ENCODE measurements at regions of chr4 and their contacts with region 1.

Region 1: GRCh38 chr4:98150092-98150761 is 7.0 kb upstream of the STPG2 start:
- DNase-seq: peak in 3 of 14 experiments; percentile 13 to 22 (median 13)
- ATAC-seq: no peak
- H3K4me3 ChIP-seq: no peak overlapping the region
- H3K4me3 Mint-ChIP-seq: no peak overlapping the region
- H3K27ac ChIP-seq: no peak overlapping the region
- H3K27ac Mint-ChIP-seq: no peak overlapping the region
- H3K4me1 ChIP-seq: no peaks in the 10 kb centered on the region
- H3K4me1 Mint-ChIP-seq: peaks cover 5% of the 10 kb centered on the region
- H3K27me3 ChIP-seq: no peaks in the 10 kb centered on the region
- H3K27me3 Mint-ChIP-seq: no peaks in the 10 kb centered on the region
- CTCF ChIP-seq: peak; percentile 60

Region 2: GRCh38 chr4:97123573-97123972 is 1026.7 kb before region 1 on chr4:
- CTCF ChIA-PET with region 1: no interaction called
- POLR2A ChIA-PET with region 1: no interaction called
- intact Hi-C with region 1: no loop called
- DNase-seq: no peak
- ATAC-seq: no peak
- H3K4me3 ChIP-seq: no peak overlapping the region
- H3K4me3 Mint-ChIP-seq: no peak overlapping the region
- H3K27ac ChIP-seq: no peak overlapping the region
- H3K27ac Mint-ChIP-seq: no peak overlapping the region
- H3K4me1 ChIP-seq: no peaks in the 10 kb centered on the region
- H3K4me1 Mint-ChIP-seq: no peaks in the 10 kb centered on the region
- H3K27me3 ChIP-seq: no peaks in the 10 kb centered on the region
- H3K27me3 Mint-ChIP-seq: no peaks in the 10 kb centered on the region
- CTCF ChIP-seq: no peak

Region 3: DNA sequence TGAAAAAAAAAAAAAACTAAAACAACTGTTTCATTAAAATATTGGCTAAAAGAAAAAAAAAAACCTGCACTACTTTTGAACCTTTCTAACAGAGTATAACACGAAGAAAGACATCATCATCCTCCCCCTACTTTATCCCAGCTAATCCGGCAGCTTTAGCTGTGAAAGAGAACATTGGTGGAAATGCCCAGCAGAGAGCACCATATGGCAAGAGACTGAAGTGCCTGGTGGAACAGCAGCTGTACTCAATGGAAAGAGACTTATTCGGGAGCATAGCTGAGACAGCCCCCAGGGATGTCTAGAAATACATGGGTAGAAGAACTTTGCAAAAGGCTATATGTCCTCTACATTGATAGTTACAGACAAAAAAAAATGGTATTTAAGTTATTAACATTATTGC is 37.2 kb before region 1 on chr4:
- CTCF ChIA-PET with region 1: no interaction called
- POLR2A ChIA-PET with region 1: no interaction called
- intact Hi-C with region 1: no loop called
- DNase-seq: peak in 3 of 14 experiments; percentile 3 to 31 (median 28)
- ATAC-seq: no peak
- H3K4me3 ChIP-seq: no peak overlapping the region
- H3K4me3 Mint-ChIP-seq: no peak overlapping the region
- H3K27ac ChIP-seq: no peak overlapping the region
- H3K27ac Mint-ChIP-seq: no peak overlapping the region
- H3K4me1 ChIP-seq: no peaks in the 10 kb centered on the region
- H3K4me1 Mint-ChIP-seq: no peaks in the 10 kb centered on the region
- H3K27me3 ChIP-seq: no peaks in the 10 kb centered on the region
- H3K27me3 Mint-ChIP-seq: no peaks in the 10 kb centered on the region
- CTCF ChIP-seq: no peak

Region 4: DNA sequence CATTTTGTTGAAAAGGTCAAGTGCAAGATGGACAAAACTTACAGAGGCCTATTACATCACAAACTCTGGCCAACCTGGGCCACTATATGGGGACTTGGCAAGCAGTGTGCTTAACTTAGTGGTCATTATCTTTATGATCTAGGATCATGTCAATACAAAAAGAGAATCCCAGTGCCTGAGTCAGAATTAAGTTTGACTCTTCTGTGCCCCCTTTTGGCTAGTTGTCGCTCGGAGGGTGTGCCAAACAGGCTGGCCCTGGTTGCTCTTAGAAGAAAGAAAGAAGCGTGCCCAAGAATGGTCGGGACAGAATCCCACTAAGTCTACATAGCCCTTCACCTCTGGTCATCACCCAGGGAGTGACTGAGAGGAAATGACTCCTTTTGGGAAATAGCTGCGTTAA is 678.6 kb after region 1 on chr4:
- CTCF ChIA-PET with region 1: no interaction called
- POLR2A ChIA-PET with region 1: no interaction called
- intact Hi-C with region 1: loop called in 1 of 2 experiments (anchors 5 kb)
- DNase-seq: peak in 13 of 14 experiments; percentile 0 to 54 (median 17)
- ATAC-seq: no peak
- H3K4me3 ChIP-seq: no peak overlapping the region
- H3K4me3 Mint-ChIP-seq: no peak overlapping the region
- H3K27ac ChIP-seq: no peak overlapping the region
- H3K27ac Mint-ChIP-seq: no peak overlapping the region
- H3K4me1 ChIP-seq: no peaks in the 10 kb centered on the region
- H3K4me1 Mint-ChIP-seq: no peaks in the 10 kb centered on the region
- H3K27me3 ChIP-seq: no peaks in the 10 kb centered on the region
- H3K27me3 Mint-ChIP-seq: no peaks in the 10 kb centered on the region
- CTCF ChIP-seq: peak; percentile 20

Region 5: GRCh38 chr4:98851806-98852205 is 701.6 kb after region 1 on chr4:
- CTCF ChIA-PET with region 1: no interaction called
- POLR2A ChIA-PET with region 1: no interaction called
- intact Hi-C with region 1: loop called in 1 of 2 experiments (anchors 10 kb)
- DNase-seq: no peak
- ATAC-seq: no peak
- H3K4me3 ChIP-seq: no peak overlapping the region
- H3K4me3 Mint-ChIP-seq: no peak overlapping the region
- H3K27ac ChIP-seq: no peak overlapping the region
- H3K27ac Mint-ChIP-seq: no peak overlapping the region
- H3K4me1 ChIP-seq: no peaks in the 10 kb centered on the region
- H3K4me1 Mint-ChIP-seq: no peaks in the 10 kb centered on the region
- H3K27me3 ChIP-seq: no peaks in the 10 kb centered on the region
- H3K27me3 Mint-ChIP-seq: peaks cover 12% of the 10 kb centered on the region
- CTCF ChIP-seq: no peak

Region 6: GRCh38 chr4:99405433-99406115 is 1255.3 kb after region 1 on chr4:
- CTCF ChIA-PET with region 1: interaction called, 6 read pairs
- POLR2A ChIA-PET with region 1: no interaction called
- intact Hi-C with region 1: loop called (anchors 2 kb)
- DNase-seq: peak; percentile 15 to 75 (median 48)
- ATAC-seq: peak; percentile 79
- H3K4me3 ChIP-seq: no peak overlapping the region
- H3K4me3 Mint-ChIP-seq: no peak overlapping the region
- H3K27ac ChIP-seq: no peak overlapping the region
- H3K27ac Mint-ChIP-seq: no peak overlapping the region
- H3K4me1 ChIP-seq: no peaks in the 10 kb centered on the region
- H3K4me1 Mint-ChIP-seq: peaks cover 5% of the 10 kb centered on the region
- H3K27me3 ChIP-seq: no peaks in the 10 kb centered on the region
- H3K27me3 Mint-ChIP-seq: no peaks in the 10 kb centered on the region
- CTCF ChIP-seq: peak; percentile 86

Measured in CD4-positive, alpha-beta T cell (primary cell).